Activated CD4-positive, alpha-beta memory T cell treated with anti-CD3 and anti-CD28 coated beads for 36 hours (primary cell): ENCODE measurements at regions of chr3 and their contacts with region 1.

Region 1: DNA sequence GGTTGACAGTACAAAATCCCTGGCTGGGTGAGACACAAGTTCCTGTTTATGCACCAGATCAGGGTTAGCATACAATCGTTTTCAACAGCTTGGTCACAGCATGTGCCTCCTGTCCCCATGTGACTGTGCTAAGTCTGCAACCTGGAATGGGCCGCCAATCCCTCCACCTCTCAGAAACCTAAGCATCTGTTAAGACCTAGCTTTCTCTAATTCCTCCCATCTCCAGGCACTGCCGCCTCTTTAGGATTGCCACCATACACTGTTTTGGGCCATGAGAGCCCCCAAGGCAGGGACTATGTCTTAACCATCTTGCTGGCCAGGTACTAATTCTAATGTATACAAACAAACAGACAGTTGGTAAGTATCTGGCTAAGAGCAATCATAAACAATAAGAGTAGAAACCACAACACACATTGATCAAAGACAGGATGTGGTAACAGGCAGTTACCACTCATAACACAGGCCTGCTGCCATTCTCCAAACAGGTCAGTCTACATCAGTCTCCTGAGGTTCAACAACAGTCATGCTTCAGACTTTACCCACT is 25.6 kb downstream of the SEC22C start:
- DNase-seq: peak; percentile 57
- H3K4me3 Mint-ChIP-seq: no peak overlapping the region
- H3K27ac Mint-ChIP-seq: peak overlapping the region; percentile 93
- H3K4me1 Mint-ChIP-seq: peaks cover 37% of the 10 kb centered on the region
- H3K27me3 Mint-ChIP-seq: no peaks in the 10 kb centered on the region

Region 2: DNA sequence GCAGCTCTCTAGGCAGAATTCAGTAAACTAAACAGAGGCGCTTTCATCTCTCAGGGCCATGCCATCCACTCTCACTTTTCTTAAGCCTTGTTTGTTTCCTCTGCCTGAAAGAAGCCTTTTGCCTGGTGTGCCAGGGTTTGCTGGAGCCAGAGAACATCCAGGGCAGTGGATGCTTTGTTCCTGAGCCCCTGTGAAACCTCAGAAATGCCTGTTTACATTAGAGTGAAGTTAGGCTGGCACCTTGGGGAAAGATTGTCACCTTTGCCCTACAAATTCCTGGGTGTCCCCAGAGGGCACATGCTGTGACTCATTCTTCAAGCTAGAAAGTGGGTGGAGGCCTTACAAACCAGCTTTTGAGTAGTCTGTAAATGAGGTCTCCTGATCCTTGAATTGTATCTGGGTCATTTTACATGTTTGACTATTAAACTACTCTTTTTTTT is 475.7 kb before region 1 on chr3:
- CTCF ChIA-PET with region 1: no interaction called
- POLR2A ChIA-PET with region 1: no interaction called
- intact Hi-C with region 1: loop called (anchors 2 kb)
- DNase-seq: peak; percentile 51
- H3K4me3 Mint-ChIP-seq: no peak overlapping the region
- H3K27ac Mint-ChIP-seq: peak overlapping the region; percentile 80
- H3K4me1 Mint-ChIP-seq: peaks cover 59% of the 10 kb centered on the region
- H3K27me3 Mint-ChIP-seq: no peaks in the 10 kb centered on the region

Region 3: DNA sequence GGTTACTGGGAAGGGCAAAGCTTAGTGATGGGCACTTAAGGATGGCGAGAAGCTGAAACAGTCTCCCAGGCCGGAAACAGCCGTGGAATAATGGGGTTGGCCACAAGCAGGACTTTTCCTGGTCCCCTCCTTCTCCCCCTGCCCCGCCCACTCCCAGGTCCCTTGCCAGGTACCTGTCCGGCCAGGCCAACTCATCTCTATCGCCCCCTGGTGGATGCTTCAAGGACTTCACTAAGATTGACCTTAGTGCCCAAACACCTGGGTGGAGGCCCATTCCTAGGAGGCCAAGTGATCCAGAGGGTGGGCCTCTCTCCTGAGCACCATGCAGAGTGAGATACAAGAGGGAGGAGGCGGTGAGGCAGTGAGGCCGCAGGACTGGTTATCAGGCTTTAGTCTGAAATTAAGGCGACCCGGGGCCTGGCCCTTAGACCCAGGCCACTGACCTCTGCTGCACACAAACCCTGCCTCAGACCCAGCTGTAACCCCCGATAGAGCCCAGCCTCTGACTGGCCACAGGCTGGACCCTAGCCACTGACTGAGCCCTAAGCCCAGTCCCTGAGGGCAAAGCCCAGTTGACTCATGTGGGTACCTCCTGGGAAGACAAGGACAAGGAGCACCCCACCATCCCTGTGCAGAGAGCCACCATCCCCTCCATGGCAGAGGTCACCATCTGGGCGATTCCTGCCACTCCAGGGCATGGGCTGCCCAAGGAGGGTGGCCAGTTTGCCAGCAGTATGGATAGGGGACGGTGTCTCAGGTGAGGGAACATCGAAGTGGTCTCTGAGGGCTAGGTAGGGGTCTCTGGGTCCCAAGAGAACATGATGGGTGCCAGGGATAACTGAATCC is 16.1 kb before region 1 on chr3:
- CTCF ChIA-PET with region 1: interaction called, 76 read pairs
- POLR2A ChIA-PET with region 1: no interaction called
- intact Hi-C with region 1: no loop called
- DNase-seq: peak; percentile 76
- H3K4me3 Mint-ChIP-seq: no peak overlapping the region
- H3K27ac Mint-ChIP-seq: no peak overlapping the region
- H3K4me1 Mint-ChIP-seq: peaks cover 7% of the 10 kb centered on the region
- H3K27me3 Mint-ChIP-seq: no peaks in the 10 kb centered on the region

Region 4: DNA sequence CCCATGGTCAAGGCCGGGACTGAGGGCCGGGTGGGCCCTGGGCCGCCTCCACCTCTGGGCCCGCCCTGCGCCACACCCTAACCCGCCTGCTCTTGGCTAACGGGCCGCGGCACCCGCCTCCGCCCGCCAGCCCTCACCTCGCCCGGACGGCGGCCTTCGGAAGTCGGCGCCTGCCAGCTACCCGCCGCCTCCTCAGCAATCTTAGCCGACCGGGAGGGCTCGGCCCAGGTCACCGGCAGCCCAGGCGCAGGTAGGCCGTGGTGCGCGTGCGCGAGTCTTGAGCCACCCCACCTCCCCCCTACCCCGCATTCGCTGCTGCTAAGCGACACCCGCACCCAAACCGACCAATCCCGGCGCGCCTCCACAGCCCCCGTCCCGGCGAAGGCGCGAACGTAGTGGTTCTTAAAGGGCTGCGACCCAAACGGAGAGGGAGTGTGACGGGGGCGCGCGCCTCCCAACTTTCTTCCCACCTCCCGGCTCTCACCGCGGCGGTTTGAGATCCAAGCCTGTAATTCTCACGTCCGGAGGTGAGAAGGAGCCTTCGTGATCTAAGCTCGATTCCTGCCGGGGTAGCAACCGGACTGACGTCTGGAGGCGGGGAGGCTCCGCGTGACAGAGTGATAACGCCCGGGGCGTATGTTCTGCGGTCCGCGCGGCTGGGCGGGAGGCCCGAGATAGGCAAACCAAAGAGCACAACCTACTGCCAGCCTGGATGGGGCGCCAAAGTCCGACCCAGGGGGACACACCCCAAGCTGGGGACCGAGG is 25.7 kb after region 1 on chr3 and contains the start of gene SEC22C:
- CTCF ChIA-PET with region 1: interaction called, 3 read pairs
- POLR2A ChIA-PET with region 1: no interaction called
- intact Hi-C with region 1: loop called (anchors 1 kb)
- DNase-seq: peak; percentile 98
- H3K4me3 Mint-ChIP-seq: peak within 1 kb of the TSS; percentile 83
- H3K27ac Mint-ChIP-seq: peak within 1 kb of the TSS; percentile 91
- H3K4me1 Mint-ChIP-seq: peaks cover 42% of the 10 kb centered on the region
- H3K27me3 Mint-ChIP-seq: no peaks in the 10 kb centered on the region
- total RNA-seq, gene SEC22C: 47.0 to 49.2 TPM

Region 5: GRCh38 chr3:42635111-42635510 is 79.0 kb after region 1 on chr3:
- CTCF ChIA-PET with region 1: no interaction called
- POLR2A ChIA-PET with region 1: no interaction called
- intact Hi-C with region 1: loop called (anchors 1 kb)
- DNase-seq: no peak
- H3K4me3 Mint-ChIP-seq: no peak overlapping the region
- H3K27ac Mint-ChIP-seq: no peak overlapping the region
- H3K4me1 Mint-ChIP-seq: peaks cover 20% of the 10 kb centered on the region
- H3K27me3 Mint-ChIP-seq: no peaks in the 10 kb centered on the region

Region 6: DNA sequence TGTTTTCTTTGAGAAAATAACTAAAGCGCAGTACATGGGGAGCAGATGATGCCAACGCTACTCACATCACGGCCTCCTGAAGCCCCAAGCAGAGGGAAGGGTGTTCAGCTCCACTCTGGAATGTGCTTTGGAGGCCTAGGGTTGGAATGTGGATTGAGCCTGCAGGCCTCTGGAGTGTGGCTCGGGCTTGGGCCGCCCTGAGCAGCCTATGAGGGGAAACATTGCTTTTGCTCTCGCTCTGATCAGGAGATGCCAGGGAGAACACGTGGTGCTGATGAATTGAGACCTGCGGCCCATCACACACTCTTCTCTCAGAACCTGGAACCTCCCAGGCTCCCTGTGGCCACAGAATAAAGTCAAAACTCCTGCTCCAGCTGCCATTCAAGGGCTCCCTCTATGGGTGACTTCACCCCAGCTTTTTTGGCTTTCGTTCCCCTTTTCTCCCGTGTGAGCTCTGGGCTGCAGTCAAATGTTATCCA is 193.6 kb after region 1 on chr3:
- CTCF ChIA-PET with region 1: interaction called, 3 read pairs
- POLR2A ChIA-PET with region 1: no interaction called
- intact Hi-C with region 1: loop called (anchors 5 kb)
- DNase-seq: peak; percentile 17
- H3K4me3 Mint-ChIP-seq: no peak overlapping the region
- H3K27ac Mint-ChIP-seq: no peak overlapping the region
- H3K4me1 Mint-ChIP-seq: peaks cover 25% of the 10 kb centered on the region
- H3K27me3 Mint-ChIP-seq: no peaks in the 10 kb centered on the region